Heart left ventricle (tissue), 16 donors: ENCODE measurements at regions of chr2 and their contacts with region 1.

Region 1: GRCh38 chr2:235011929-235012631 is 60.3 kb downstream of the SH3BP4 start:
- DNase-seq: no peak
- ATAC-seq: peak in 3 of 4 donors; percentile 14 to 39 (median 38)
- H3K4me3 ChIP-seq: no peak overlapping the region
- H3K27ac ChIP-seq: no peak overlapping the region
- H3K4me1 ChIP-seq: peaks cover 0 to 34% (median 6%) of the 10 kb centered on the region in 12 donors
- H3K27me3 ChIP-seq: no peaks in the 10 kb centered on the region
- CTCF ChIP-seq: no peak
- POLR2A ChIP-seq: no peak

Region 2: DNA sequence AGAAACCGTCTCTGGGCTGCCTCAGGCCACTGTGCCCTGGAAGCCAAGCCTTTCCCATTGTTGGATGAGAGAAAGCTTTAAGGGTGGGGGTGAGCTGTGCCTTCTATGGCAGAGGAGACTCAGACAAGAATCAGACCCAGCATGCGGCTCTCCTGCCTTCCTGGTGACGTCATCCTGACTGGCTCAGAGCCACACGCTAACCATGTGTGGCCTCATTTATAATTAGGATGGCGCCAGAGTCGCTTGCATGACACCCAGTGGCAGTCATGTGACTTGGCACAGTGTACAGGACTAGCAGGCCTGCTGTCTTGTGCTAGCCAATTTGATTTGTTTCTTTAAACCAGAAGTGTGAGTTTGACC is 38.9 kb after region 1 on chr2:
- intact Hi-C with region 1: loop called in 1 of 10 experiments (anchors 2 kb)
- DNase-seq: peak; percentile 89 to 97 (median 93)
- ATAC-seq: peak; percentile 90 to 95 (median 90)
- H3K4me3 ChIP-seq: no peak overlapping the region
- H3K27ac ChIP-seq: peak overlapping the region; percentile 51 to 86 (median 78)
- H3K4me1 ChIP-seq: peaks cover 2 to 57% (median 27%) of the 10 kb centered on the region in 12 donors
- H3K27me3 ChIP-seq: no peaks in the 10 kb centered on the region
- CTCF ChIP-seq: peak in 6 of 12 donors; percentile 5 to 37 (median 18)
- POLR2A ChIP-seq: peak in 1 of 2 donors; percentile 30

Region 3: GRCh38 chr2:235087812-235088495 is 75.9 kb after region 1 on chr2:
- intact Hi-C with region 1: loop called in 2 of 10 experiments (anchors 5 to 10 kb)
- DNase-seq: peak; percentile 61 to 81 (median 73)
- ATAC-seq: peak; percentile 61 to 77 (median 72)
- H3K4me3 ChIP-seq: peak overlapping the region in 9 of 12 donors; percentile 6 to 36 (median 29)
- H3K27ac ChIP-seq: peak overlapping the region in 11 of 12 donors; percentile 6 to 76 (median 47)
- H3K4me1 ChIP-seq: peaks cover 0 to 25% (median 3%) of the 10 kb centered on the region in 12 donors
- H3K27me3 ChIP-seq: no peaks in the 10 kb centered on the region
- CTCF ChIP-seq: peak in 4 of 12 donors; percentile 6 to 31 (median 20)
- POLR2A ChIP-seq: no peak